ENCODE measurements at regions of chr10 and their contacts with region 1.

Region 1: DNA sequence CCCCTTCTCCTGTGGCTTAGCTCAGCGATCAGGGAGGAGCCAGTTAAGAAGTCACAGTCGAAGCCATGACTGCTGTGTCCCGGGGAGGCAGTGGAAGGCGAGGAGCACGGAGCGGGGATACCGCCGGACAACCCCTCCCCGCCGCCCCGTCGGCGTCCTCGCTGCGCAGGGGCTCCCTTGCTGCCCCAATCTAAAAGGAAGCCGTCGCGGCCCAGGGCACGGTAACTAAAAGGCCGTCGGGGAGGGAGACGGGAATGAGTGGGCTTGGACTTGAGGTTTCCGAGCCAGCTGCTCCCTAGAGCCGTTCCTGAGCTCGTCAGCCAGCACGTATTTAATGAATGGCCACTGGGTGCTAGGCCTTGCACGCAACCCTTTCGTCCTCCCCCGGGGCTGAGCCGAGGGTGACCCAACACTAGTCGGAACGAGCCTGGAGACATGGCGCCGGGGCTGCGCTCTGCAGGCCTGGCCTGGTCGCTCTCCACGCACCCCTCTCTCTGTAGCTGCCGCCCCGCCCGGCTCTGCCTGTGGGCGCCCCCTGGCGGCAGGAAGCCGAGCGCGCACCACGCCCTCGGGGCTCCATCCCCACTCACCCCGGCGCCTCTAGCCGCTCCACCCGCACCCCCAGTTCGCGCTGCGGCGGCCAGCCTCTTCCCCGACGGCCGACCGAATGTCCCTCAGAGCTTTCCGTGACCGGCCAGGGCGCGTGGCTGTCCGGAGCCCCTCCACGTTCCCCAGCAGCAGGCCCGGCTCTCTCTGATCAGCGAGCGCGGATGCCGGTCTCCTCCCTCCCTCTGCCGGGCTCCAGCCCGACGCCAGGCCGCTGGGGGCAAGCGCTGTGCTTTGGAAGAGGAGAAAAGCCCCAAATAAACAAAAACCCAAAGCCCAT is 29.3 kb upstream of the KCNK18 start:
- DNase-seq: peak; percentile 75
- H3K4me3 Mint-ChIP-seq: no peak overlapping the region
- H3K27ac Mint-ChIP-seq: no peak overlapping the region
- H3K4me1 Mint-ChIP-seq: peaks cover 32% of the 10 kb centered on the region
- H3K27me3 Mint-ChIP-seq: peaks cover 78% of the 10 kb centered on the region

Region 2: DNA sequence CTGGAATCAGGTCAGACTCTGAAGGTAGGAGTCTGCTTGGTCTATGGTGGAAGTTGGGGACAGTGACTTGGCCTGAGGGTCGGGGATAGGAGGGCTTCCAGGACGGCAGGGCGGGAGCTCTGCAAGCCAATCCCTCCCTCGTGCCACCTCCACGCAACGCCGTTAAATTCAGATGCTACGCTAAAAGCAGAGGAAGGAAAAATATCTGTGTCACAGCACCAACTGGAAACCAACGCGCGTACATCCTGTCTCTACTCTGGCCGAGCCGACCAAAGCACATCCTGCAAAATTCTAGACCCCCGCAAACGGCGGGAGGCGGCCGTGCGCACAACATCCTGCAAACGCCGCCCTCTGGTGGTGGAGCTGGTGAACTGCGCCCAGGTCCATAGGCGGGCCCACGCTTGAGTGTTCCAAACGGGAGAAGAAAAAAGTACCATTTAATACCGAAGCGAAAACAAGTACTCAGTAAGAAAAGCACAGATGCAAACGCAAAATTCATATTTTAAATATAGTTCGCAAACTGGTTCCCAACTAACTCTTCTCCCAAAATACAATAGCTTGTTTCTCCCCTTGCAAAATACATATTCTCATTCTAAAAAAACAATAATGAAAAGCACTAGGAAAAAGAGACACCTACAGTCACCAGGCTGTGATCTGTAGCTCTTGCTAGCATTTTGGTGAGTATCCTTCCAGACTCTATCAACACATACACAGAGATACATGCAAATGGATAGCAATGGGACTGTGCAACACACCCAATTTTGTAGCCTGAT is 380.0 kb before region 1 on chr10:
- CTCF ChIA-PET with region 1: interaction called, 12 read pairs
- POLR2A ChIA-PET with region 1: no interaction called
- intact Hi-C with region 1: no loop called
- DNase-seq: peak; percentile 84
- H3K4me3 Mint-ChIP-seq: peak overlapping the region; percentile 16
- H3K27ac Mint-ChIP-seq: no peak overlapping the region
- H3K4me1 Mint-ChIP-seq: peaks cover 18% of the 10 kb centered on the region
- H3K27me3 Mint-ChIP-seq: peaks cover 25% of the 10 kb centered on the region

Region 3: DNA sequence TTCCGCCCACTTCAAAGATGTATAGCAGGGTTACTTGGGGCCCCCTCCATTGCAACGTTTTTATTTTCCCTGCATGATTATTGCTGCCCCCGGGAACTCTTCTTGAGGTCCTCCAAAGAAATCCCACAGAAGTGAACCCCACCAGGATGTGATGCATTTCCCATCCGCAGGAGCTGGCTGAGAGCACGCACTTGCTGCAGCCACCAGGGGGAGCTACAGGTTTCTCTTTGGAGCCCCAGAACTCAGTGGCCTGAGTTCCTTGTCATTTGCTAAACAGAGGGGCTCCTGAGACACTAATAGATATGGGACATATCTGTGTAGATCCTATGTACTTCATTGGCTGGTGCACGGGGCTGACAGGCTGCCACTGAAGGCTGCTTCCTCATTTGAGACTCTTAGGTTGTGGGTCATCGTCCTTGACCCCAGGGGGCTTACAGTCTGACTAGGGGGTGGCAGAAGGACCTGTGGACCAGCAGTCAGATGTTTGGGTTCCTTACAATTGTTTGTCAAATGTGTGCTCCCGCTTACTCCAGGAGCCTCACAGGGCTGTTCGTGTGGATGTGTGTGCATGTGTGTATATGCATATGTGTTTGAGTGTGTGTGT is 371.0 kb before region 1 on chr10:
- CTCF ChIA-PET with region 1: interaction called, 120 read pairs
- POLR2A ChIA-PET with region 1: interaction called, 3 read pairs
- intact Hi-C with region 1: loop called (anchors 1 kb)
- DNase-seq: peak; percentile 76
- H3K4me3 Mint-ChIP-seq: no peak overlapping the region
- H3K27ac Mint-ChIP-seq: no peak overlapping the region
- H3K4me1 Mint-ChIP-seq: peaks cover 6% of the 10 kb centered on the region
- H3K27me3 Mint-ChIP-seq: peaks cover 31% of the 10 kb centered on the region

Region 4: DNA sequence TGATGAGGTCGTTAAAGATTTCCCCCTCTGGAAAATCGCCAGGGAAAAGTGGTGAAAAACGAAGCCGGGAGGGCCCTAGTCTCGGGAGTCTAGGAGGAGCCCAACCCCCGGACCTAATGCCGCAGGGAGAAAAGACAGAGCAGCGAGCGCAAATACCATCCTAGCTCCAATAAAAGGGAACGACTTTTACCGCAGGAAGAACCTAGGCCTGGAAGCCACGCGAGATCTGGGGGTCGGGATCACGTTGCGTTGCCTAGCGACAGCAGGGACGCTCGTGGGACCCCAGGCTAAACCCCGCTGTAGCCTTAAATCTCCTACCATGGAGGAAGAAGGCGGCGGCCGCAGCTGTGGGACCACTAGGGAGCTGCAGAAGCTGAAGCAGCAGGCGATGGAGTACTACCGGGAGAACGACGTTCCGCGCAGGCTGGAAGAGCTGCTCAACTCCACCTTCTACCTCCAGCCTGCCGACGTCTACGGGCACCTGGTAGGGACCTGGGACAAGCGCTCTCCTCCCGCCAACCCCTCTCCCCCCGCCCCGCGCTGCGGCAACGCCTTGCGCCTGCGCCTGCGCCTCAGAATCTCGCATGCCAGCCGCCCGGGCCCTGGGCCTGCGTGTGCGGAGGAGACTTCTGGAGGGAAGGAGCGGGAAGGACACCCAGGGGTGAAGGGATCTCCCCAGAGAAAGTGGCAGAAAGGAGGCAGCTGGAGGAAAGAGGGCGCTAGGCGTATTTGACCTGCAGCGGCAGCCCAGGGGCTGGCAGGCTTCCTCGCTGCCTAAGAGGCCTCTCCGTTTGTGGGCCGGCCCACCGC is 318.6 kb before region 1 on chr10 and contains the start of gene ENO4:
- CTCF ChIA-PET with region 1: interaction called, 3 read pairs
- POLR2A ChIA-PET with region 1: no interaction called
- intact Hi-C with region 1: loop called (anchors 2 kb)
- DNase-seq: peak; percentile 48
- H3K4me3 Mint-ChIP-seq: peak within 1 kb of the TSS; percentile 54
- H3K27ac Mint-ChIP-seq: no peak within 1 kb of the TSS
- H3K4me1 Mint-ChIP-seq: peaks cover 13% of the 10 kb centered on the region
- H3K27me3 Mint-ChIP-seq: peaks cover 58% of the 10 kb centered on the region
- total RNA-seq, gene ENO4: not detected

Region 5: GRCh38 chr10:117131376-117132327 is 36.4 kb before region 1 on chr10:
- CTCF ChIA-PET with region 1: interaction called, 18 read pairs
- POLR2A ChIA-PET with region 1: no interaction called
- intact Hi-C with region 1: no loop called
- DNase-seq: no peak
- H3K4me3 Mint-ChIP-seq: peak overlapping the region; percentile 32
- H3K27ac Mint-ChIP-seq: no peak overlapping the region
- H3K4me1 Mint-ChIP-seq: peaks cover 36% of the 10 kb centered on the region
- H3K27me3 Mint-ChIP-seq: peaks cover 75% of the 10 kb centered on the region

Region 6: DNA sequence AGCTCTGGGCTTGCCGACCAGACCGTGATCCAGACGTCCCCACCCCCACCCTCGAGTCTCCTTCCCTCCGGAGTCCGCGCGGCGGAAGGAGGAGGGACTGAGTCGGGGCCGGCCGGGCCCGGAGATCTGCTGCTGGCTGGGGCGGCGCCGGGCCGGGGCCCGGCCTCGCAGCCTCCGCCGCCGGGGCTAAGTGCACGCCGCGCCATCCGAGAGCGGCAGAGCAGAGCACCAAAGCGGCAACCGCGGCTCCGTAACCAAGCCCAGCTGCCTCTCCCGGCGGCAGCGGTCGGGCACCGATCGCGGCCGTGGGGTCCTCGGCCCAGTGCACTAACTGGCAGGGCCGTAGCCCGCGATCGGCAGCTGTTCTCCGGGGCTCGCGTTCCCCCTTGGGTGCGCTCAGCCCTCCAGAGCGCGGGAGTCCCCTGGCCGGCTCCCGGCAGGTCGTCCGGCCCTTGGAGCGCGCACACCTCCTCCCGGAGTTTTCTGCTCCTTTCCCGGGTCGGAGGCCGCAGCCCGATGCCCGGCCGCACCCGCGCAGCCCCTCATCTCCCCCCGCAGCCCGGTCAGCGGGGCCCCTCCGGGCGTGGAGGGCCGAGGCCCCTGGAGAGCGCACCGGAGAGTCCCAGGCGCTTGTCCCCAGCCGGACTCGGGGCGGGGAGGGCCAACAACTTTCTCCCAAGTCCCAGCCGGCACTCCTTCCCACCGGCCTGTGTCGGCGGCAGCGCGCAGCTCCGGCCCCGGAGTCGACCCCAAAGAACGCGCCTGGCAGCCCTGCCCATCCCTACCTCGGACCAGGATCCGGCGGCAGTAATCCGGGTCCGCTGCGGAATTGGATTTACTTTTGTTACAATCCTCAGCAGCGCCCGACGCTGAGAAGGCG is 30.8 kb before region 1 on chr10:
- CTCF ChIA-PET with region 1: interaction called, 15 read pairs
- POLR2A ChIA-PET with region 1: no interaction called
- intact Hi-C with region 1: loop called (anchors 1 kb)
- DNase-seq: no peak
- H3K4me3 Mint-ChIP-seq: no peak overlapping the region
- H3K27ac Mint-ChIP-seq: no peak overlapping the region
- H3K4me1 Mint-ChIP-seq: peaks cover 23% of the 10 kb centered on the region
- H3K27me3 Mint-ChIP-seq: peaks cover 71% of the 10 kb centered on the region

Region 7: GRCh38 chr10:117198088-117198487 is 30.1 kb after region 1 on chr10:
- CTCF ChIA-PET with region 1: no interaction called
- POLR2A ChIA-PET with region 1: no interaction called
- intact Hi-C with region 1: no loop called
- DNase-seq: no peak
- H3K4me3 Mint-ChIP-seq: no peak overlapping the region
- H3K27ac Mint-ChIP-seq: no peak overlapping the region
- H3K4me1 Mint-ChIP-seq: no peaks in the 10 kb centered on the region
- H3K27me3 Mint-ChIP-seq: peaks cover 5% of the 10 kb centered on the region

Region 8: DNA sequence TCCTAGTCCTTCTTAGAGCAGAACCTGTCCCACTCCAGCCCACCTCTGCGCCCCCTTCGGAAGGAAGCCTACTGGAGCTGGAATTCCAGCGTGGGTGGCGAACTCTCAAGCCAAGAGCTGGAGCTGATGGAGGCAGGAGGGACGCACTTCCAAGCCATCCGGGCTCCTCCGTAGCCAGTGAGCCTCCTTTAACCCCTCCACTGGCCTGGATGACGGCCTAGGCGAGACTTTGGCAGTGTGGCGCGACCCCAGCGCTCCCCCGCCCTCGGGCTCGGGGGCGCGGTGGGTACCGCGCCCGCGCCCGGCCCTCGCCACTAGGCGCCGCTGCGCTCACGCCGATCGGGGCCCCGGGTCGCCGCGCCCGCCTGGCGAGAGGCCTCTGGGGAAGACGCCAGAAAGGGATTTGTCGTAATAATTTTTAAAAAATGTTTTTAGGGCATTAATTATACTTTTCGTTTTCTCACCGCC is 369.4 kb after region 1 on chr10:
- CTCF ChIA-PET with region 1: interaction called, 3 read pairs
- POLR2A ChIA-PET with region 1: no interaction called
- intact Hi-C with region 1: loop called (anchors 2 kb)
- DNase-seq: peak; percentile 39
- H3K4me3 Mint-ChIP-seq: no peak overlapping the region
- H3K27ac Mint-ChIP-seq: no peak overlapping the region
- H3K4me1 Mint-ChIP-seq: peaks cover 18% of the 10 kb centered on the region
- H3K27me3 Mint-ChIP-seq: peaks cover 66% of the 10 kb centered on the region